Endothelial cell of umbilical vein (primary cell): ENCODE measurements at regions of chr12 and their contacts with region 1.

Region 1: DNA sequence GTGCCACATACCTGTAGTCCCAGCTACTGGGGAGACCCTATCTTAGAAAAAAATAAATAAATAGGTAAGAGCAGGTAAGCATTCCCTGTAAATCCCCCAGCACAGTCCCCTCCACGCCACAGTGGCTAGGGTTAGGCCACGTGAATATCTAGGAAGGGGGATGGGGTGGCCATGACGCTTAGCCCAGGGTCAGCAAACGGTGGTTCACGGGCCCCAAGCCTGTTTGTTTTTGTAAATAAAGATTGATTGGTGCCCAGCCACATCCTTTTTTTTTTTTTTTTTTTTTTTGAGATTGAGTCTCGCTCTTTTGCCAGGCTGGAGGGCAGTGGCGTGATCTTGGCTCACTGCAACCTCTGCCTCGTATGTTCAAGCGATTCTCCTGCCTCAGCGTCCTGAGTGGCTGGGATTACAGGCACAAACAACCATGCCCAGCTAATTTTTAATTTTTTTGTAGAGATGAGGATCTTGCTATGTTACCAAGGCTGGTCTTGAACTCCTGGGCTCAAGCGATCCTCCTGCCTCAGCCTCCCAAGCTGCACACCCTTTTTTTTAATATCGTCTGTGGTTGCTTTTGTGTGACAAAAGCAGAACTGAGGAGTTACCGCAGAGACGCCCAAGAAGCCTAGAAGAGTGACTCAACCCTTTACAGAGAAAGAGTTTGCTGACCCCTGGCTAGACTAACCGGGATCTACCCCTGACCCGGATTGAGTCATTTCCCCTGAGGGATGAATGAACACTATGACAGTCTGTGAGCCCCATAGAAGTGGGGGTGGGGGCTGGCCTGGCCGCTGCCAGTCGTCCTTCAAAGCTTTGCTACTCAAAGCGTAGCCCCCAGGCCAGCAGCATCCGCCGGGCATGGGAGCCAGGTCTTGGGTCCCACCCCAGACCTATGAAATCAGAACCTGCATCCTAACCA is 113.7 kb upstream of the NCOR2 start:
- DNase-seq: peak; percentile 94
- H3K4me3 ChIP-seq: no peak overlapping the region
- H3K27ac ChIP-seq: peak overlapping the region; percentile 98
- H3K4me1 ChIP-seq: peaks cover 41% of the 10 kb centered on the region
- H3K27me3 ChIP-seq: no peaks in the 10 kb centered on the region
- CTCF ChIP-seq: peak; percentile 28 to 39
- POLR2A ChIP-seq: peak; percentile 54

Region 2: GRCh38 chr12:124388679-124389536 is 292.2 kb before region 1 on chr12:
- CTCF ChIA-PET with region 1: no interaction called
- POLR2A ChIA-PET with region 1: no interaction called
- dilution Hi-C with region 1: no loop called
- intact Hi-C with region 1: loop called (anchors 2 kb)
- DNase-seq: peak; percentile 87
- H3K4me3 ChIP-seq: peak overlapping the region; percentile 42 to 83 (median 81)
- H3K27ac ChIP-seq: peak overlapping the region; percentile 92
- H3K4me1 ChIP-seq: peaks cover 84% of the 10 kb centered on the region
- H3K27me3 ChIP-seq: no peaks in the 10 kb centered on the region
- CTCF ChIP-seq: no peak
- POLR2A ChIP-seq: peak; percentile 66

Region 3: DNA sequence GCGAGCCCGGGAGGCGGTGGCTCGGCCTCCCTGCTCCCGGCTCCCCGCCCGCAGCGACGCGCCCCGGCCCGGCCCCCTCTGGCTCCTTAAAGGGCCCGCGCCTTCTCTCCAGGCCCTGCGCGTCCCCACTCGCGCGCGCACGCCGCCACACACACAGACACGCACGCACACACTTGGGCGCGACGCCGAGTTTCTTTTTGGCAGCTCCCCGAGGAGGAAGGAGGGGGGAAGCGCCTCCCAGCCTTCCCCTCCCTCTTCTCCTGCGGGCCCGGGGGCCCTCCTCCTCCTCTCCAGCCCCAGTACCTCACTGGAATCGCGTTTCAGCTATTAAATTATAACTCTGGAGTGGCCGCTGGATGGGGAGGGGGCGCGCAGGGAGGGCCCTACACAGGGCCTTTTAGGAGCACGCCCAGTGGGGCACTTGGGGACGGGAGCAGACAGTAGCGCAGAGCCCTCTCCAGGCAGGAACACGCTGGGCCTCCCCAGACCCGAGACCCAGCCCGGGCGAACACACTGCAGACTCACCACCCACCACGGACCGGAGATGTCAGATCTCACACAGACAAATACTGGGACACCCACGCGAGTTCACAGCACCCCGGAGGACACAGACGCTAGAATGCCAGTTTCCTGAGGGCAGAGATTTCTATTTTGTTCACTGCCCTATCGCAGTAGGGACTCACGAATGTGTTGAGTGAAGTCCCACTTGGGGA is 113.3 kb before region 1 on chr12:
- CTCF ChIA-PET with region 1: interaction called, 3 read pairs
- POLR2A ChIA-PET with region 1: no interaction called
- dilution Hi-C with region 1: loop called (anchors 25 kb)
- intact Hi-C with region 1: loop called (anchors 1 kb)
- DNase-seq: peak; percentile 70
- H3K4me3 ChIP-seq: peak overlapping the region; percentile 35 to 86 (median 45)
- H3K27ac ChIP-seq: peak overlapping the region; percentile 43
- H3K4me1 ChIP-seq: peaks cover 10% of the 10 kb centered on the region
- H3K27me3 ChIP-seq: no peaks in the 10 kb centered on the region
- CTCF ChIP-seq: peak in 1 of 2 donors; percentile 12
- POLR2A ChIP-seq: no peak

Region 4: DNA sequence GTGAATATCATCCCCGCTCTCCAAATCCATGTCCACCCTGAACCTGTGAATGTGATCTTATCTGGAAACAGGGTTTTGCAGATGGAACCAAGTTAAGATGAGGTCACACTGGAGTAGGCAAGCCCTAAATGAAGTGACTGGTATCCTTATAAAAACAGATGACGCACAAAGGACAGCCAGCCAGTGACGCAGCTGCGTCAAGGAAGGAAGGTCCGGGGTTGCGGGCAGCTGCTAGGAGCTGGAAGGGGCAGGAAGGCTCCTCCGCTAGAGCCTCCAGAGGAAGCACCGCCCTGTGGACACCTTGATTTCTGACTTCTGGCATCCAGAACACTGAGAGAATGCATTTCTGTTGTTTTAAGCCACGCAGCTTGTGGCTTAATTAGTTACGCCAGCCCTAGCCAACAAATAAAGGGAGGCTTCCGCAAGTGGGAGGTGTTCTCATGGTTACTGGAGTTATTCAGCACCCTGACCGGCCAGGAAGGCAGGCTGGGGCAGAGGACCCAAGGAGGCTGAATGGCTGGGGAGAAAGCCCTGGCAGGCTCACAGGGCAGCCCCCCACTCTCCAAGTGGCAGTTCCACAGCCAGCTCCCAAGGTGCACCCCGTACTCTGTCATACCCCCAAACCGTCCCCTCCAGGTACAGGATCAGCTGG is 13.9 kb after region 1 on chr12:
- CTCF ChIA-PET with region 1: interaction called, 11 read pairs
- POLR2A ChIA-PET with region 1: no interaction called
- dilution Hi-C with region 1: no loop called
- intact Hi-C with region 1: loop called (anchors 1 kb)
- DNase-seq: peak; percentile 90
- H3K4me3 ChIP-seq: no peak overlapping the region
- H3K27ac ChIP-seq: peak overlapping the region; percentile 65
- H3K4me1 ChIP-seq: peaks cover 15% of the 10 kb centered on the region
- H3K27me3 ChIP-seq: peaks cover 0 to 1% of the 10 kb centered on the region in 2 experiments
- CTCF ChIP-seq: peak in 1 of 2 donors; percentile 13
- POLR2A ChIP-seq: no peak

Region 5: DNA sequence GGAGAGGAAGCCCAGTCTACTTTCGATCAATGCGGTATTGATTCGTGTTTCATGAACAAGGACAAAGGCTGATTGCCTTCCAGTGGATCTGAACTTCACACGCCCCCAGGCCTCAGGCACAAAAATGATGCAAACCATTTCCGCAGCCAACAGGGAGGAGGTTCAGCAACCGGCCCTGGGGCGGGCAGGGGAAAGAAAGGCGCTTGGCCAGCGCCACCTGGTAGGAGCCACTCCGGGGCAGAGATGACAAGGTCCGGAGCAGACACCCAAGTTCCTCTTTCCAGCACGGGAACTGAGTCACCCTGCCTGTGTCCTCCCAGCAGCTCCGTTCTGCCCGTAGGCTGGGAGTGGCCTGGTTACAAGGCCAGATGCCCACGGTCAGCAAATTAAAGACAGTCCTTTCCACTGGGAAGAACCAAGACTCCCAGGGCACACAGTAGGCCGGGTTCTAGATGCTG is 46.2 kb after region 1 on chr12:
- CTCF ChIA-PET with region 1: interaction called, 8 read pairs
- POLR2A ChIA-PET with region 1: no interaction called
- dilution Hi-C with region 1: loop called (anchors 10 kb)
- intact Hi-C with region 1: loop called (anchors 1 kb)
- DNase-seq: peak; percentile 86
- H3K4me3 ChIP-seq: no peak overlapping the region
- H3K27ac ChIP-seq: peak overlapping the region; percentile 80
- H3K4me1 ChIP-seq: peaks cover 16% of the 10 kb centered on the region
- H3K27me3 ChIP-seq: no peaks in the 10 kb centered on the region
- CTCF ChIP-seq: no peak
- POLR2A ChIP-seq: no peak